HCT116 (cell line): ENCODE measurements at regions of chr16 and their contacts with region 1.

Region 1: GRCh38 chr16:53598511-53599275 is 95.7 kb upstream of the AKTIP start:
- DNase-seq: no peak
- ATAC-seq: no peak
- H3K4me3 ChIP-seq: no peak overlapping the region
- H3K27ac ChIP-seq: no peak overlapping the region
- H3K4me1 ChIP-seq: no peaks in the 10 kb centered on the region
- H3K27me3 ChIP-seq: no peaks in the 10 kb centered on the region
- CTCF ChIP-seq: no peak
- POLR2A ChIP-seq: no peak
- RAD21 ChIP-seq: no peak

Region 2: GRCh38 chr16:54687043-54687899 is 1088.6 kb after region 1 on chr16:
- CTCF ChIA-PET with region 1: no interaction called
- POLR2A ChIA-PET with region 1: no interaction called
- RAD21 ChIA-PET with region 1: no interaction called
- intact Hi-C with region 1: loop called (anchors 10 kb)
- DNase-seq: no peak
- ATAC-seq: no peak
- H3K4me3 ChIP-seq: no peak overlapping the region
- H3K27ac ChIP-seq: no peak overlapping the region
- H3K4me1 ChIP-seq: no peaks in the 10 kb centered on the region
- H3K27me3 ChIP-seq: peaks cover 25% of the 10 kb centered on the region
- CTCF ChIP-seq: no peak
- POLR2A ChIP-seq: no peak
- RAD21 ChIP-seq: no peak